Breast epithelium (tissue), 4 donors: ENCODE measurements at regions of chr13 and their contacts with region 1.

Region 1: GRCh38 chr13:19890030-19890429 is 26.6 kb upstream of the ZMYM5 start:
- DNase-seq: no peak
- H3K4me3 ChIP-seq: no peak overlapping the region
- H3K27ac ChIP-seq: no peak overlapping the region
- H3K4me1 ChIP-seq: no peaks in the 10 kb centered on the region
- H3K27me3 ChIP-seq: no peaks in the 10 kb centered on the region
- CTCF ChIP-seq: no peak
- POLR2A ChIP-seq: no peak

Region 2: DNA sequence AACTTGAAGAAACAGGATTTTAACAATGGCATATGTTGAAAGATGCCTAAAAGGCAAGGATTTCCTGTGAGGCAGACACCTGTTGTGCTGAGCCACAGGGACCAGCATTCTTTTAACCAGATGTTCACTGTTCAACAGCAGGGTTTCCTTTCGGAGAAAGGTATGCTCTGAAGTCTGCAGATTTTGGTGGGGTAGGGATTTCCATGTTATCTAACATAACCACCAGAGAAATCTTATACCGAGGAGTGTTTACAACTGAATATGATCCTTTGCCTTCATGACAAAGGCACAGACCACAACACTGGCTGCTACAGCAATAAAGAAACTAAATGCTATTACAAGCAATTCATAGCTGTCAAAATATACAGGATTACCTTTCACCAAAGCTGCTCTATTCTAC is 208.5 kb before region 1 on chr13:
- intact Hi-C with region 1: no loop called
- DNase-seq: no peak
- H3K4me3 ChIP-seq: no peak overlapping the region
- H3K27ac ChIP-seq: no peak overlapping the region
- H3K4me1 ChIP-seq: no peaks in the 10 kb centered on the region
- H3K27me3 ChIP-seq: no peaks in the 10 kb centered on the region
- CTCF ChIP-seq: no peak
- POLR2A ChIP-seq: no peak

Region 3: DNA sequence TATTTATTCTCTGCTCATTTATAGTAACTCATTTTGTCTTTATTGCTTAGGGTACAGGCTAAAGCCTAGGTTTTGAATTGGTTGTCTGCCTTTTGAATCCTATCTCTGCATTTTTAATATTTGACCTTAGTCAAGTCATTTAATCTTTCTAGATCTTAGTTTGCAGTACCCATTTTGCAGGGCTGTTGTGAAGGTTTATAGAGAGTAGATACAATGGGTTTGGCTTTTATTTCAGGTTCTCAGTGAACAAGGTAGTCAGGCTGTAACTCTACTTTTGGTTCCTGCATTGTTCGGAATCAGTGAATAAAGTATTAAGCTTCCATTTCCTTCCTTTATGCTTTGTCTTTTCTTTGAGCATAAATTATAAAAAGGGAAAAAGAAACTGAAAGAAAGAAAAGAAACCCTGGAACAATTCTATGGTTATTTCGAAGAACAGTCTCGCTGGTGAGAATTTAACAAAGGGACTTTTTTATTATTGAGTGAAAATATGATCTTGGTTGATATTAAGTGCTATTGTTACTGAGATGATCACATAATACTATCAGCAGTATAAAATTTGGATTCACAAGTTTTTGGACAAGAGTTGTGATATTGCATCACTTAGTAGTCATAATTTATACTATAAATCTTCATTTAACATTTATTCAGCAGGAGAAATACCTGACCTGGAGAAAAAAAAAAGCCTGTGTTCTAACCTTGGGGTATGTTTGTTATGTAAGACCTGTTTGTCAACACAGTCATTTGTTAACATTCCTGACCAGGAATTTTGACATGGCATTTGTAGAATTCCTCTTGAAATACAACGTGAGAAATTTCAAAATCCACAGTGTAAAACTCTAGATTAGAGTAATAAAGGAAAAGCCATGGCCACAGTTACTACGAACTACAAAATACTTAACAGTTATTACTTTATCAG is 159.8 kb after region 1 on chr13:
- intact Hi-C with region 1: loop called (anchors 5 kb)
- DNase-seq: no peak
- H3K4me3 ChIP-seq: peak overlapping the region in 1 of 3 donors; percentile 3
- H3K27ac ChIP-seq: no peak overlapping the region
- H3K4me1 ChIP-seq: no peaks in the 10 kb centered on the region
- H3K27me3 ChIP-seq: no peaks in the 10 kb centered on the region
- CTCF ChIP-seq: no peak
- POLR2A ChIP-seq: no peak